Transverse colon (tissue), 4 donors: ENCODE measurements at regions of chr3 and their contacts with region 1.

Region 1: GRCh38 chr3:160027541-160028195 is 39.0 kb downstream of the IL12A start:
- DNase-seq: no peak
- H3K4me3 ChIP-seq: no peak overlapping the region
- H3K27ac ChIP-seq: no peak overlapping the region
- H3K4me1 ChIP-seq: peaks cover 0 to 3% (median 0%) of the 10 kb centered on the region in 4 donors
- H3K27me3 ChIP-seq: no peaks in the 10 kb centered on the region
- CTCF ChIP-seq: no peak
- EP300 ChIP-seq: no peak
- POLR2A ChIP-seq: no peak

Region 2: GRCh38 chr3:160114355-160114995 is 86.8 kb after region 1 on chr3:
- in situ Hi-C with region 1: no loop called
- intact Hi-C with region 1: no loop called
- DNase-seq: no peak
- H3K4me3 ChIP-seq: no peak overlapping the region
- H3K27ac ChIP-seq: no peak overlapping the region
- H3K4me1 ChIP-seq: no peaks in the 10 kb centered on the region
- H3K27me3 ChIP-seq: no peaks in the 10 kb centered on the region
- CTCF ChIP-seq: no peak
- EP300 ChIP-seq: no peak
- POLR2A ChIP-seq: no peak

Region 3: GRCh38 chr3:160129459-160130061 is 101.9 kb after region 1 on chr3:
- in situ Hi-C with region 1: loop called in 1 of 4 experiments (anchors 25 kb)
- intact Hi-C with region 1: no loop called
- DNase-seq: no peak
- H3K4me3 ChIP-seq: no peak overlapping the region
- H3K27ac ChIP-seq: no peak overlapping the region
- H3K4me1 ChIP-seq: no peaks in the 10 kb centered on the region
- H3K27me3 ChIP-seq: no peaks in the 10 kb centered on the region
- CTCF ChIP-seq: no peak
- EP300 ChIP-seq: no peak
- POLR2A ChIP-seq: no peak

Region 4: GRCh38 chr3:160343132-160343531 is 315.5 kb after region 1 on chr3:
- in situ Hi-C with region 1: loop called in 2 of 4 experiments (anchors 10 to 25 kb)
- intact Hi-C with region 1: loop called (anchors 10 kb)
- DNase-seq: no peak
- H3K4me3 ChIP-seq: no peak overlapping the region
- H3K27ac ChIP-seq: no peak overlapping the region
- H3K4me1 ChIP-seq: no peaks in the 10 kb centered on the region
- H3K27me3 ChIP-seq: no peaks in the 10 kb centered on the region
- CTCF ChIP-seq: peak; percentile 28 to 48 (median 41)
- EP300 ChIP-seq: no peak
- POLR2A ChIP-seq: no peak

Region 5: GRCh38 chr3:160413613-160414248 is 386.1 kb after region 1 on chr3:
- in situ Hi-C with region 1: loop called in 2 of 4 experiments (anchors 10 kb)
- intact Hi-C with region 1: loop called (anchors 2 kb)
- DNase-seq: peak; percentile 65
- H3K4me3 ChIP-seq: no peak overlapping the region
- H3K27ac ChIP-seq: no peak overlapping the region
- H3K4me1 ChIP-seq: no peaks in the 10 kb centered on the region
- H3K27me3 ChIP-seq: no peaks in the 10 kb centered on the region
- CTCF ChIP-seq: peak; percentile 78 to 91 (median 82)
- EP300 ChIP-seq: no peak
- POLR2A ChIP-seq: no peak